B cell (primary cell): ENCODE measurements at regions of chr14 and their contacts with region 1.

Region 1: GRCh38 chr14:50060871-50061663 is 55.3 kb downstream of the VCPKMT start:
- DNase-seq: peak; percentile 34
- ATAC-seq: no peak
- H3K4me3 ChIP-seq: peak overlapping the region in 3 of 5 experiments; percentile 0 to 9 (median 2)
- H3K4me3 Mint-ChIP-seq: peak overlapping the region; percentile 95
- H3K27ac ChIP-seq: peak overlapping the region; percentile 92 to 96
- H3K27ac Mint-ChIP-seq: peak overlapping the region; percentile 100
- H3K4me1 ChIP-seq: peaks cover 60 to 82% of the 10 kb centered on the region in 2 donors
- H3K4me1 Mint-ChIP-seq: peaks cover 87% of the 10 kb centered on the region
- H3K27me3 ChIP-seq: no peaks in the 10 kb centered on the region
- H3K27me3 Mint-ChIP-seq: no peaks in the 10 kb centered on the region
- CTCF ChIP-seq: no peak

Region 2: GRCh38 chr14:49879683-49880204 is 181.3 kb before region 1 on chr14:
- CTCF ChIA-PET with region 1: interaction called, 12 read pairs
- POLR2A ChIA-PET with region 1: no interaction called
- intact Hi-C with region 1: no loop called
- DNase-seq: peak; percentile 69
- ATAC-seq: peak; percentile 85
- H3K4me3 ChIP-seq: no peak overlapping the region
- H3K4me3 Mint-ChIP-seq: no peak overlapping the region
- H3K27ac ChIP-seq: peak overlapping the region in 1 of 2 donors; percentile 59
- H3K27ac Mint-ChIP-seq: peak overlapping the region; percentile 72
- H3K4me1 ChIP-seq: peaks cover 12 to 16% of the 10 kb centered on the region in 2 donors
- H3K4me1 Mint-ChIP-seq: peaks cover 15% of the 10 kb centered on the region
- H3K27me3 ChIP-seq: no peaks in the 10 kb centered on the region
- H3K27me3 Mint-ChIP-seq: no peaks in the 10 kb centered on the region
- CTCF ChIP-seq: peak; percentile 58

Region 3: DNA sequence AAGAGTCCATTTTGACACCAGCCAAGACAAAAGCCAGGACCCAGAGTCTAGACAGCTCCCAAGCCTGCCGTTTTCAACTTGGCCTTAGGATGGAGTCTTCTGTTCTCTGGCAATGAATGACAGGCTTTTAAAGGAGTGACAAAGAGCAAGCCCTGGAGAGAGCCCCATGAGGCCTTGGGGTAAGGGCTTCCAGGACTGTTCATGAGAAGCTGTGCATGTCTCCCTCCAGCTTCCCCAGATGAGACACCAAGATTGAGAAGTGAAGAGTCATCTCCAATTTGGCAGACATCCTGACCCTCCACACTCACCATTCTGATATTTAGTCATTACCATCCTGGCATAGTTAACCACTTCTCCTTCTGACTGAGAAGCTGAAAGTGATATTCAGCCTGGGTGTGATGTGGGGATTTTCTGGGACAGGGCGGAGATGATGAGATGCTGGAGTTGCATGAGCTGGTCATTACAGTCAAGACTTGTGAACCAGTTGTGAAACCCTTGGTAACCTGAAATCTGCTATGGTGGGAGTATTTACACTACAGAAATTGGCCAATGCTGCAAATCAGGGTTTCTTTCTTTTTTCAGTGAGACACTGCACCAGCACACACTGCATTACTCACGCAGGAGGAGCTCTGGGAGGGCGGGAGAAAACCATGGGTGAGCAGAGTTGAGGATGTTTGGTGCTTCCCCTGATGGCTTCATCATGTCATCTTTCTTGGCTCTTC is 22.5 kb before region 1 on chr14:
- CTCF ChIA-PET with region 1: interaction called, 36 read pairs
- POLR2A ChIA-PET with region 1: interaction called, 9 read pairs
- intact Hi-C with region 1: loop called (anchors 1 kb)
- DNase-seq: peak; percentile 50
- ATAC-seq: peak; percentile 47
- H3K4me3 ChIP-seq: no peak overlapping the region
- H3K4me3 Mint-ChIP-seq: peak overlapping the region; percentile 7
- H3K27ac ChIP-seq: peak overlapping the region in 1 of 2 donors; percentile 38
- H3K27ac Mint-ChIP-seq: peak overlapping the region; percentile 53
- H3K4me1 ChIP-seq: peaks cover 36 to 38% of the 10 kb centered on the region in 2 donors
- H3K4me1 Mint-ChIP-seq: peaks cover 45% of the 10 kb centered on the region
- H3K27me3 ChIP-seq: no peaks in the 10 kb centered on the region
- H3K27me3 Mint-ChIP-seq: no peaks in the 10 kb centered on the region
- CTCF ChIP-seq: no peak

Region 4: GRCh38 chr14:50085570-50086320 is 24.7 kb after region 1 on chr14:
- CTCF ChIA-PET with region 1: interaction called, 56 read pairs
- POLR2A ChIA-PET with region 1: interaction called, 32 read pairs
- intact Hi-C with region 1: loop called (anchors 1 kb)
- DNase-seq: peak; percentile 91
- ATAC-seq: peak; percentile 75
- H3K4me3 ChIP-seq: peak overlapping the region in 3 of 5 experiments; percentile 18 to 48 (median 24)
- H3K4me3 Mint-ChIP-seq: peak overlapping the region; percentile 82
- H3K27ac ChIP-seq: peak overlapping the region; percentile 95 to 100
- H3K27ac Mint-ChIP-seq: peak overlapping the region; percentile 96
- H3K4me1 ChIP-seq: peaks cover 85 to 91% of the 10 kb centered on the region in 2 donors
- H3K4me1 Mint-ChIP-seq: peaks cover 87% of the 10 kb centered on the region
- H3K27me3 ChIP-seq: no peaks in the 10 kb centered on the region
- H3K27me3 Mint-ChIP-seq: no peaks in the 10 kb centered on the region
- CTCF ChIP-seq: no peak

Region 5: GRCh38 chr14:50109342-50109741 is 48.3 kb after region 1 on chr14:
- CTCF ChIA-PET with region 1: interaction called, 35 read pairs
- POLR2A ChIA-PET with region 1: interaction called, 9 read pairs
- intact Hi-C with region 1: loop called (anchors 1 kb)
- DNase-seq: no peak
- ATAC-seq: no peak
- H3K4me3 ChIP-seq: no peak overlapping the region
- H3K4me3 Mint-ChIP-seq: no peak overlapping the region
- H3K27ac ChIP-seq: peak overlapping the region in 1 of 2 donors; percentile 85
- H3K27ac Mint-ChIP-seq: no peak overlapping the region
- H3K4me1 ChIP-seq: peaks cover 28 to 34% of the 10 kb centered on the region in 2 donors
- H3K4me1 Mint-ChIP-seq: peaks cover 40% of the 10 kb centered on the region
- H3K27me3 ChIP-seq: no peaks in the 10 kb centered on the region
- H3K27me3 Mint-ChIP-seq: no peaks in the 10 kb centered on the region
- CTCF ChIP-seq: no peak

Region 6: GRCh38 chr14:50354527-50354926 is 293.5 kb after region 1 on chr14:
- CTCF ChIA-PET with region 1: no interaction called
- POLR2A ChIA-PET with region 1: no interaction called
- intact Hi-C with region 1: no loop called
- DNase-seq: no peak
- ATAC-seq: no peak
- H3K4me3 ChIP-seq: no peak overlapping the region
- H3K4me3 Mint-ChIP-seq: no peak overlapping the region
- H3K27ac ChIP-seq: no peak overlapping the region
- H3K27ac Mint-ChIP-seq: no peak overlapping the region
- H3K4me1 ChIP-seq: no peaks in the 10 kb centered on the region
- H3K4me1 Mint-ChIP-seq: peaks cover 1% of the 10 kb centered on the region
- H3K27me3 ChIP-seq: no peaks in the 10 kb centered on the region
- H3K27me3 Mint-ChIP-seq: no peaks in the 10 kb centered on the region
- CTCF ChIP-seq: no peak